Activated CD4-positive, alpha-beta memory T cell treated with anti-CD3 and anti-CD28 coated beads for 36 hours (primary cell): ENCODE measurements at regions of chr7 and their contacts with region 1.

Region 1: DNA sequence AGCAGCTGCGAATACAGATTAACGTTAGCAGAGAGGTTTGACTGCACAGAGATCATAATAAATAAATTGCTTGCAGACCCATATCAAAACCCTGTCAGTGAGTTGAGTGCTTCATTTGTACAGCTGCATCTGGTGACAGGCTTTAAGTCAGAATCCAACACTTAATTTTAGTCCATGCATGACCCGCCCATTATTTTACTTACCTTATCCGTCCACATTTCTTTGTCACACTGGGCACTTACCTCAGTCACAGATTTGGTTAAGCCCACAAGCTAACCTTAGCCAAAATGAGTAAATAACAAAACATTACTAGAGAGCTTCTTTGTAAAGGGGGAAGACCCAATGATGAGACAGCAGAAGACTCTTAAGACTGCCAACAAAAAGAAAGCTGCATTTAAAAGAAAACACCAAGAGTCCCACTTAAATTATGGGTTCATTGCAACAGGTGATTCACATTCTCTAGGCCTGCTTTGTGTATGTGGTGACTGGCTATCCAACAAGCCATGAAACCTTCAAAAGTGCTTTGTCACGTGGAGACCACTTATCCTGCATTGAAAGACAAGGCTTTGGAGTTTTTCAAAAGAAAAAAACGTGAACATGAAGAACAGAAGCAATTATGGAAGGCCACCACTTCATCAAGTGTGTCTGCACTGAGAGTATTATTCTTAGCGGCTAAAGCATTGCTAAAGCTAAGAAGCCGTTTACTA is 32.2 kb downstream of the PHTF2 start:
- DNase-seq: no peak
- H3K4me3 Mint-ChIP-seq: peak overlapping the region; percentile 30
- H3K27ac Mint-ChIP-seq: peak overlapping the region; percentile 76
- H3K4me1 Mint-ChIP-seq: peaks cover 66% of the 10 kb centered on the region
- H3K27me3 Mint-ChIP-seq: no peaks in the 10 kb centered on the region

Region 2: GRCh38 chr7:77812290-77812685 is 18.5 kb before region 1 on chr7:
- CTCF ChIA-PET with region 1: no interaction called
- POLR2A ChIA-PET with region 1: interaction called, 9 read pairs
- intact Hi-C with region 1: loop called (anchors 2 kb)
- DNase-seq: no peak
- H3K4me3 Mint-ChIP-seq: no peak overlapping the region
- H3K27ac Mint-ChIP-seq: no peak overlapping the region
- H3K4me1 Mint-ChIP-seq: peaks cover 49% of the 10 kb centered on the region
- H3K27me3 Mint-ChIP-seq: no peaks in the 10 kb centered on the region

Region 3: DNA sequence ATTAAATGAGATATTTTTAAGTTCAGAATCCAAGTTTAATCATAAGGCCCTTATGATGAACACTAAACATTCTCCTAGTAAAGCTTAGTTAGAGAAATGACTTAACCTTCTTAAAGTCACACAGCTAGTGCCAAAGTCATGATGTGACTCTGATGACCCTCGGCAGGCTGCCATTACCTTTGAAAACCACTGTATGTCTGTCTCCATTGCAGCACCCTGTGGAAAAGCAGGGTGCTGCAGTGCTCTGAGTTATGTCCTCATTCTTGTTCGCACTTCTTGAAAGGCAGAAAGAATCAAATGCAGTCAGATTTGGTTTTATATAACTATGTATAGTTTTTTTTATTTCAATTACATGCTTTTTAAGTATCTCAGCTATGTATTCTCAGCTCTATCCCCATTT is 72.8 kb after region 1 on chr7:
- CTCF ChIA-PET with region 1: interaction called, 3 read pairs
- POLR2A ChIA-PET with region 1: no interaction called
- intact Hi-C with region 1: loop called (anchors 5 kb)
- DNase-seq: peak; percentile 38
- H3K4me3 Mint-ChIP-seq: no peak overlapping the region
- H3K27ac Mint-ChIP-seq: no peak overlapping the region
- H3K4me1 Mint-ChIP-seq: peaks cover 5% of the 10 kb centered on the region
- H3K27me3 Mint-ChIP-seq: no peaks in the 10 kb centered on the region